Tibial artery (tissue), 4 donors: ENCODE measurements at regions of chr7 and their contacts with region 1.

Region 1: GRCh38 chr7:154693661-154694060 is 309.3 kb downstream of the PAXIP1 start:
- DNase-seq: no peak
- H3K4me3 ChIP-seq: no peak overlapping the region
- H3K27ac ChIP-seq: no peak overlapping the region
- H3K4me1 ChIP-seq: no peaks in the 10 kb centered on the region
- H3K27me3 ChIP-seq: no peaks in the 10 kb centered on the region
- CTCF ChIP-seq: no peak

Region 2: GRCh38 chr7:153829549-153829948 is 864.1 kb before region 1 on chr7:
- intact Hi-C with region 1: loop called (anchors 5 kb)
- DNase-seq: no peak
- H3K4me3 ChIP-seq: no peak overlapping the region
- H3K27ac ChIP-seq: no peak overlapping the region
- H3K4me1 ChIP-seq: no peaks in the 10 kb centered on the region
- H3K27me3 ChIP-seq: no peaks in the 10 kb centered on the region
- CTCF ChIP-seq: no peak

Region 3: DNA sequence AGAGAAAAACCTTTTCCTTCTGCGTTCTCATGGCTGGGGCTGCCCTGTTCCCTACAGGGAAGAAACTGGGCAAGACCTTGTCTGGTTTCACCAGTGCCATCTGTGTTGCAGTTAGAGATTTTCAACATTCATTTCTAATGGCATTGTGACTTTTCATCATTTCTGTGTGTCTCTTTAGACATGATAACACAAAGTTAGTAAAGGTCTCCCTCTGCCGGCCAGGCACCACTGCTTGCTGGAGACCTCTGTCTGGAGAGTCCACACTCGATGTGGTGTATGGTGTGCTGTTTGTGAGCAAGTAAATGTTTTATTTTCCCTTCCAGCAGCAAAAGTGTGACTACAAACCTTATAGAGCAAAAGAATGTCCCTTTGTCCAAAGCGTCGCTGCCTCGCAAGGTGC is 95.7 kb after region 1 on chr7:
- intact Hi-C with region 1: no loop called
- DNase-seq: no peak
- H3K4me3 ChIP-seq: no peak overlapping the region
- H3K27ac ChIP-seq: no peak overlapping the region
- H3K4me1 ChIP-seq: no peaks in the 10 kb centered on the region
- H3K27me3 ChIP-seq: peaks cover 0 to 6% of the 10 kb centered on the region in 2 donors
- CTCF ChIP-seq: no peak